PC-3 (cell line): ENCODE measurements at regions of chr3 and their contacts with region 1.

Region 1: DNA sequence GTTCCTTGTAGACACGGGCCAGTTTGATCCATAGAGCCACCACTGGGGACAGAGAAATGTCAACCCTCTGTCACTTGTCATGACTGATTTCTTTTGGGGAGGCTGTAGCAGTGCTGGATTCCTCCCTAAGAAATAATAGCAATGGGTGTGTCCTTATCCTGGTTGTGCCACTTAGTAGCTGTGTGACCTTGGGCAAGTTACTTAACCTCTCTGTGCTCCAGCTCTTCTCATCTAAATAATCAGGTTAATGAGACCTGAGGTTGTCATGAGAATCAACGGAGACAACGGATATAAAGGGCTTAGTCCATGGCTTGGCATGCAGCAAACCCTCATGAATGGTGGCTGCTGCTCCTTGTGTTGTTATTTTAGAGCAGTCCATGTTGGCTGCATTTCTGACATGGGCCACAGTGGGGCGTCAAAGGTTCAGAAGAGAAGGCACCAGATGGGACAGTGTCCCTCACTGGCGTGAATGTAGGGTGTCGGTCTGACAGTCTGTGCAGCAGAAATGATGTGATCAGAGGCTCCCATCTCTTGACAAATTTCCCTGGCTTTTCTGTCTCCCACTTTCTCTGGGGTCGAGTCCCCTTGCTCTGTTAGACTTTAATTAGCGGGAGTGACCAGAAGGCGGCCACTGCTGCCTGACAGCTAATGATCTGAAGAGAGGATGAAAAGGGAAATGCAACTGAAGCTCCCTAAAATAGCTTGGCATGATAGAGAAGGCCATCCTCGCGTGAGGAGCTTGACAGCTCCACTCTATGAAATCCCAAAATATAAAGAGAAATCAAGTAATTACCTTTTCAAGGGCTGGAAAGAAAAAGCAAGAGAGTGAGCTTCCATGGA is 209.4 kb downstream of the CADPS start:
- DNase-seq: peak; percentile 71
- ATAC-seq: peak; percentile 90
- H3K4me3 ChIP-seq: no peak overlapping the region
- H3K27ac ChIP-seq: no peak overlapping the region
- H3K4me1 ChIP-seq: no peaks in the 10 kb centered on the region
- H3K27me3 ChIP-seq: no peaks in the 10 kb centered on the region
- CTCF ChIP-seq: peak; percentile 75

Region 2: GRCh38 chr3:62559831-62560445 is 105.9 kb before region 1 on chr3:
- CTCF ChIA-PET with region 1: no interaction called
- POLR2A ChIA-PET with region 1: no interaction called
- intact Hi-C with region 1: no loop called
- DNase-seq: peak; percentile 35
- ATAC-seq: peak; percentile 51; the same call in 1 of the 2 replicates
- H3K4me3 ChIP-seq: no peak overlapping the region
- H3K27ac ChIP-seq: no peak overlapping the region
- H3K4me1 ChIP-seq: no peaks in the 10 kb centered on the region
- H3K27me3 ChIP-seq: no peaks in the 10 kb centered on the region
- CTCF ChIP-seq: peak; percentile 55

Region 3: DNA sequence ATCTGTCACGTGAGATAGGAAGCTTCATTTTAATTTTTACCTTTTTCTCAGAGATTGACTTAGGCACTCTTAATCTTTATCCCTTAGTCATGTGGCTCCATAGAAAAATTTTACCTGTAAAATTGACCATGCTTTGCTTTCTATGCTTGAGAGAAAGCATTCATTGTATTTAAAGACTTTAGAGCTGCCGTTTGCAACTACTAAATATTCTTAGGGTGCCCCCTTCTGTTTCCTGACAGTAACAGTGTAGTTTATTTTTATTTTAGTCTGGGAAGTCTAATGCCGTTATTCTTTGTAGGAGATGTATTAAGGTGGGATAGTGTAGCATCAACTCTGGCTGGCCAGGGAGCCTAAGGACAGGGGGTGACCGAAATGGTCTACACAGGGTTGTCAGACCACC is 527.8 kb after region 1 on chr3:
- CTCF ChIA-PET with region 1: no interaction called
- POLR2A ChIA-PET with region 1: no interaction called
- intact Hi-C with region 1: loop called (anchors 2 kb)
- DNase-seq: peak; percentile 23
- ATAC-seq: no peak
- H3K4me3 ChIP-seq: no peak overlapping the region
- H3K27ac ChIP-seq: no peak overlapping the region
- H3K4me1 ChIP-seq: no peaks in the 10 kb centered on the region
- H3K27me3 ChIP-seq: no peaks in the 10 kb centered on the region
- CTCF ChIP-seq: peak; percentile 55

Region 4: GRCh38 chr3:63232739-63233365 is 567.0 kb after region 1 on chr3:
- CTCF ChIA-PET with region 1: no interaction called
- POLR2A ChIA-PET with region 1: no interaction called
- intact Hi-C with region 1: loop called (anchors 2 kb)
- DNase-seq: peak; percentile 15
- ATAC-seq: no peak
- H3K4me3 ChIP-seq: no peak overlapping the region
- H3K27ac ChIP-seq: no peak overlapping the region
- H3K4me1 ChIP-seq: no peaks in the 10 kb centered on the region
- H3K27me3 ChIP-seq: no peaks in the 10 kb centered on the region
- CTCF ChIP-seq: peak; percentile 61; the same call in 1 of the 2 replicates